GM23248 (cell line): ENCODE measurements at regions of chr11 and their contacts with region 1.

Region 1: GRCh38 chr11:118051611-118052461 is 25.0 kb upstream of the TMPRSS4 start:
- DNase-seq: no peak
- H3K4me3 ChIP-seq: no peak overlapping the region
- H3K27ac ChIP-seq: no peak overlapping the region
- H3K4me1 ChIP-seq: no peaks in the 10 kb centered on the region
- H3K27me3 ChIP-seq: peaks cover 6% of the 10 kb centered on the region; the same call in 1 of the 2 replicates

Region 2: GRCh38 chr11:117833401-117833891 is 218.4 kb before region 1 on chr11:
- in situ Hi-C with region 1: loop called (anchors 10 kb)
- DNase-seq: no peak
- H3K4me3 ChIP-seq: no peak overlapping the region
- H3K27ac ChIP-seq: no peak overlapping the region
- H3K4me1 ChIP-seq: no peaks in the 10 kb centered on the region
- H3K27me3 ChIP-seq: peaks cover 37% of the 10 kb centered on the region

Region 3: DNA sequence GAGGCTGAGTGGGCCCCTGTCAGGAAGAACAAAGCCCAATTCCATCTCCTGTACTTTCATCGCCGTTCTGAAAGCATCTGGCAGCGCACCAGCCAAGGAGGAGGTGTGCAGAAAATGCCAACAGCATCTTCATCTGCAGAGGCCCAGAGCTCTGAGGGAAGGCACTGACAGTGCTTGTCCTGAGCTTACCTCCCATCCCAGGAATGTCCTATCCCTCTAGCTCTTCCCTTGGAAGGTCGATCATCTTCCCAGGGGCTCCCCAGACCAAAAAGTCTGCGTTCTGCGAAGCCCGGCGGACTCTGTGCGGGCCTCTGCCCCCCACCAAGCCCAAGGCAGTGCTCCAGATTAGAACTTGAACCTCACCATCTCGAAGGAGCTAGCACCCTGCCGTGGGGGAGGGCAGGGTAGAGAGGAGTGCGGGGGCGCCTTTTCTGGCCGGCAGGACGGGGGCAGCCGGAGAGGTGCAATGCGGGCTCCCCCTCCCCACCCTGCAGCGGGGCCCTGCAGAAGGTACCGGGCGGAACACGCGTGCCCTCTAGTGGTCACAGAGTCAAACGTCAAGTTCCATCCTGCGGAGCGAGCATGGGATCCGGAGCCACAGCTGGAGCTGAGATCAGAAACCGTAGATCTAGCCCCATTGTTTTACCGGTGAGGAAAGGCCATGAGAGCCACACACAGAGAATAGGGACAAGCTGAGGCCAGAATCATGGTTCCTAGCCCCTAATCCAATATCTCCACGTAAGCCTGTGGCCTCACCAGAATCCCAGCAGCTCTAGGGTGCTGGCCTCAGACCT is 119.6 kb after region 1 on chr11:
- in situ Hi-C with region 1: no loop called
- DNase-seq: peak; percentile 63
- H3K4me3 ChIP-seq: no peak overlapping the region
- H3K27ac ChIP-seq: no peak overlapping the region
- H3K4me1 ChIP-seq: no peaks in the 10 kb centered on the region
- H3K27me3 ChIP-seq: peaks cover 25% of the 10 kb centered on the region